ENCODE measurements at regions of chr7 and their contacts with region 1.

Region 1: DNA sequence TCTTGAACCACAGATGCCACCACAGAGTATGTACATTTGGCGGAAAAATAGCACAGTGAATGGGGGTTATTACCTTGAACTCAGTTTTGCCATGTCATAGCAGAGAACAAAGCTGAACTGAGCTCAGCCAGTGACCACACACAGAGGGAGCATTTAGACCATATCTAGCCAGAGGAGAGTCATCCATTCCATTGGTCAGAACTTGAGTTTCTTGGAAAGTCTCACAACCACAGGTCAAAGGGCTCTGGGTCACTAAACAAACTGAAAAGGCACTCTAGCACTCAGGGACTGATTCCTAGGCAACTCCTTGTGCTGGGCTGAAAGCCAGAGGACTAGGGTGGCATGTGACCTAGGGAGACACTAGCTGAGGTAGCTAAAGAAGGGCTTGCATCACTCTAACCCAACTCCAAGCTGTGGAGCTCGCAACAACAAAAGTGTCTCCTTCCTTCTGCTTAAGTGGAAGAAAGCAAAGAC is 239.7 kb upstream of the SEMA3D start:
- DNase-seq: no peak
- ATAC-seq: no peak
- H3K4me3 ChIP-seq: no peak overlapping the region
- H3K27ac ChIP-seq: no peak overlapping the region
- H3K4me1 ChIP-seq: no peaks in the 10 kb centered on the region
- H3K27me3 ChIP-seq: no peaks in the 10 kb centered on the region
- CTCF ChIP-seq: no peak
- POLR2A ChIP-seq: no peak

Region 2: GRCh38 chr7:85081392-85081791 is 345.1 kb before region 1 on chr7:
- in situ Hi-C with region 1: no loop called
- intact Hi-C with region 1: no loop called
- DNase-seq: no peak
- ATAC-seq: no peak
- H3K4me3 ChIP-seq: no peak overlapping the region
- H3K27ac ChIP-seq: no peak overlapping the region
- H3K4me1 ChIP-seq: no peaks in the 10 kb centered on the region
- H3K27me3 ChIP-seq: no peaks in the 10 kb centered on the region
- CTCF ChIP-seq: no peak
- POLR2A ChIP-seq: no peak

Region 3: DNA sequence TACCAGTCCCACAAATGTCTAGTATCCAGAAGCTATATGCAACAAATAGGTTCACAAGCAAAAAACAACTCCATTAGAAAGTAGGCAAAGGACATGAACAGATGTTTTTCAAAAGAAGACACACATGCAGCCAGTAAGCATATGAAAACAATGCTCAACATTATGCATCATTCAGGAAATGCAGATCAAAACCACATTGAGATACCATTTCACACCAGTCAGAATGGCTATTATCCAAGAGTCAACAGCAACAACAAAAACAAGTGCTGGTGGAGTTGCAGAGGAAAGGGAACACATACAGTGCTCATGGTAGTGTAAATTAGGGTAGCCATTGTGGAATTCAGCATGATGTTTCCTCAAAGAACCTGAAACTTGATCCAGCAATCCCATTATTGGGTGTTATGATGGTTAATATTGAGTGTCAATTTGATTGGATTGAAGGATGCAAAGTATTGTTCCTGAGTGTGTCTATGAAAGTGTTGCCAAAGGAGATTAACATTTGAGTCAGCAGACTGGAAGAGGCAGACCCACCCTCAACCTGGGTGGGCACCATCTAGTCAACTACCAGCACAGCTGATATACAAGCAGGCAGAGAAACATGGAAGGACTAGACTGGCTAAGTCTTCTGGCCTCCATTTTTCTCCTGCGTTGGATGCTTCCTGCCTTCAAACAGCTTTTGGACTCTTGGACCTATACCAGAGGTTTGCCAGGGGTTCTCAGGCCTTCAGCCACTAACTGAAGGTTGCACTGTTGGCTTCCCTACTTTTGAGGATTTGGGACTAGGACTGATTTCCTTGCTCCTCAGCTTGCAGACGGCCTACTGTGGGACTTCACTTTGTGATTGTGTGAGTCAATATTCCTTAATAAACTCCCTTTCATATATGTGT is 21.3 kb before region 1 on chr7:
- in situ Hi-C with region 1: no loop called
- intact Hi-C with region 1: loop called (anchors 1 kb)
- DNase-seq: no peak
- ATAC-seq: no peak
- H3K4me3 ChIP-seq: no peak overlapping the region
- H3K27ac ChIP-seq: no peak overlapping the region
- H3K4me1 ChIP-seq: no peaks in the 10 kb centered on the region
- H3K27me3 ChIP-seq: no peaks in the 10 kb centered on the region
- CTCF ChIP-seq: no peak
- POLR2A ChIP-seq: no peak